Stomach (tissue), 19 donors: ENCODE measurements at regions of chr4 and their contacts with region 1.

Region 1: DNA sequence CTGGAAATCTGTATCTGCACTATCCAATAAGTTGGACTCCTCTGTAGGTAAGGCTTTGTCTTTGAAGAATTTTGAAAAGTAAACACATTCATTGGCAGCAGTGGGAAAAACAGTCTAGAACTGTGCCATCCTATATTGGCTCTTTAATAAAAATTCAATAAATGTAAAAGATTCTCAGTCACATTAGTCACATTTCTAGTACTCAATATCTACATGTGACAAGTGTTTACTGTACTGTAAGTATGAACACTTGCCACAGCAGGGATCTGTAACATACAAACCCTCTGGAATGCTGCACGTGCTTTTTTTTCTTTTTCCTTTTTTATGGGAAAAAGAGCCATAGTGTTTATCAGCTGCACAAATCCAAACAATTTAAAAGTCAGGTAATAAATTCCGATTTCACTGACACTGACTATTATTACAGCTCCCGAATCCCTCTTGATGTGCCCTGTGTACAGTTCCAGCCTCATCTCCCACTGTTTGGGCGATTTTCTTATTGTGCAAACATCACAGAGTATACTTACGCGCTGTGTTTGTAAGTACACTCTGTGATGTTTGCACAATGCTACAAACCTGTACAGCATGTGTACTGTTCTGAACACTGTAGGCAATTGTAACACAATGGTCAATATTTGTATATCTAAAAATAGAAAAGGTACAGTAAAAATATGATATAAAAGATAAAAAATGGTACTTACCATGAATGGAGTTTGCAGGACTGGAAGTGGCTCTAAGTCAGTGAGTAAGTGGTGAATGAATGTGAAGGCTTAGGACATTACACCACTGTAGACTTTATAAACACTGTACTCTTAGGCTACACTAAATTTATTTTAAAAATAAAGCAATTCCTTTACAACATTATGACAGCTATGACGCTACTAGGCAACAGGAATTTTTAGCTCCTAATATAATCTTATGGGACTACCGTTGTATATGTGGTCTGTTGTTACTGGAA is 8.7 kb downstream of the PYURF start:
- DNase-seq: peak in 1 of 2 donors; percentile 63
- H3K4me3 ChIP-seq: no peak overlapping the region
- H3K27ac ChIP-seq: peak overlapping the region in 1 of 5 donors; percentile 31
- H3K4me1 ChIP-seq: peaks cover 8 to 15% (median 11%) of the 10 kb centered on the region in 4 donors
- H3K27me3 ChIP-seq: no peaks in the 10 kb centered on the region
- CTCF ChIP-seq: no peak
- EP300 ChIP-seq: no peak
- POLR2A ChIP-seq: no peak

Region 2: GRCh38 chr4:88033309-88033708 is 481.5 kb before region 1 on chr4:
- intact Hi-C with region 1: loop called (anchors 10 kb)
- DNase-seq: peak; percentile 31 to 87
- H3K4me3 ChIP-seq: no peak overlapping the region
- H3K27ac ChIP-seq: no peak overlapping the region
- H3K4me1 ChIP-seq: peaks cover 0 to 10% (median 0%) of the 10 kb centered on the region in 4 donors
- H3K27me3 ChIP-seq: no peaks in the 10 kb centered on the region
- CTCF ChIP-seq: peak in 5 of 7 experiments; percentile 51 to 74 (median 64)
- EP300 ChIP-seq: no peak
- POLR2A ChIP-seq: no peak

Region 3: GRCh38 chr4:88216395-88216794 is 298.4 kb before region 1 on chr4:
- intact Hi-C with region 1: loop called (anchors 5 kb)
- DNase-seq: peak; percentile 80 to 83
- H3K4me3 ChIP-seq: no peak overlapping the region
- H3K27ac ChIP-seq: no peak overlapping the region
- H3K4me1 ChIP-seq: peaks cover 3 to 5% (median 4%) of the 10 kb centered on the region in 4 donors
- H3K27me3 ChIP-seq: no peaks in the 10 kb centered on the region
- CTCF ChIP-seq: no peak
- EP300 ChIP-seq: no peak
- POLR2A ChIP-seq: no peak

Region 4: DNA sequence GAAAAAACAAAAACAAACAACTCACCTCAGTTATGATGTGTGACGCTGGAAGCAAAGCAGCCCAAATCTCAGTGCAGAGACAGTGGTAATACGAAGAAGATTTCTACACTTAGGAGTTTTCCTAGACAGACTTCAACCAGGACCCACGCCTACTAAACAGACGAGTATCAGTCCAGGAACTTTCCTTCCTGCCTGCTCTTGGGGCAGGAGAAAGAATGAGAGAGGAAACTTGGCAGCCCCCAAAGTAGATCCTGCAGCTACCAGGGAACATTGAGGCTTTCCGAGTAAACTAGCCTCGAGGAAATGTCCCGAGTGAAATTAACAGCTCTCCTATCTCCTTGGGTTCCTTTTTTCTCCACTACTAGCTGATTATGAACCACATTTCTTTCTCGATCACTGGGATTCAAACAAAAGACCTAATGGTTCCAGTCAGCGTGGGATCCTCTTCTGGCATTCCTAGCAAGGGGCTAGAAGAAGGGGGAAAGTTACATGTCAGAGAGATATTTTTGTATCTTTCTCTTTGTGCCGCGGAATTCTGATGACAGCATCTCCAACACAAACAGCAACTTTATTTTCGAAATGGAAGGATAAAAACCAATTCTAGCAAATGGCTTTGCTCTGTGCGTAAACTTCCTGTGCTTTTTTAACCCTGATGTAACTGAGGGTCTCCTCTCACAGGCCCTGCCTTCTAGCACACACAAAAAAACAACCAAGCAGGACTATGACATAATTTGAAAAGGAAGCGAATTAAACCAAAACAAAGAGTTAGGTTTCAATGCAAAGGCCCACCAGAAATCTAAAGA is 283.7 kb before region 1 on chr4:
- intact Hi-C with region 1: no loop called
- DNase-seq: peak in 1 of 2 donors; percentile 57
- H3K4me3 ChIP-seq: peak overlapping the region; percentile 5 to 27 (median 24)
- H3K27ac ChIP-seq: peak overlapping the region in 4 of 5 donors; percentile 32 to 69 (median 62)
- H3K4me1 ChIP-seq: peaks cover 0 to 5% (median 0%) of the 10 kb centered on the region in 4 donors
- H3K27me3 ChIP-seq: no peaks in the 10 kb centered on the region
- CTCF ChIP-seq: no peak
- EP300 ChIP-seq: no peak
- POLR2A ChIP-seq: no peak

Region 5: GRCh38 chr4:88366460-88366859 is 148.4 kb before region 1 on chr4:
- intact Hi-C with region 1: loop called (anchors 5 kb)
- DNase-seq: no peak
- H3K4me3 ChIP-seq: no peak overlapping the region
- H3K27ac ChIP-seq: no peak overlapping the region
- H3K4me1 ChIP-seq: no peaks in the 10 kb centered on the region
- H3K27me3 ChIP-seq: no peaks in the 10 kb centered on the region
- CTCF ChIP-seq: no peak
- EP300 ChIP-seq: no peak
- POLR2A ChIP-seq: no peak

Region 6: DNA sequence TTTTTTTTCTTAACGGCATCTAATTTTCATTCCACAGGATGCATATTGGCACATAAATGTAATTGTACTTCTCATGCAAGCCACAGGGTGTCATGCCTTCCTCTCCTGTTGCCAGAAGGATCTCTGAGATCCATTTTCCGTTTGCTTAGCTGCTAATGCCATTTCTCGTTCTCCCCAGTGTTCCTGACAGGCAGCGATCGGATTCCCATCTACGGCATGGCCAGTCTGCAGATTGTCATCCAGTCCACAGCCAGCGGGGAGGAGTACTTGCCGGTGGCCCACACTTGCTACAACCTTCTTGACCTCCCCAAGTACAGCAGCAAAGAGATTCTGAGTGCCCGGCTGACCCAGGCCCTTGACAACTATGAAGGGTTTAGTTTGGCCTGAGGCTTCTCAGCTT is 191.7 kb after region 1 on chr4:
- intact Hi-C with region 1: no loop called
- DNase-seq: peak in 1 of 2 donors; percentile 81
- H3K4me3 ChIP-seq: no peak overlapping the region
- H3K27ac ChIP-seq: peak overlapping the region in 3 of 5 donors; percentile 16 to 54 (median 36)
- H3K4me1 ChIP-seq: peaks cover 0 to 12% (median 6%) of the 10 kb centered on the region in 4 donors
- H3K27me3 ChIP-seq: no peaks in the 10 kb centered on the region
- CTCF ChIP-seq: peak in 5 of 7 experiments; percentile 41 to 88 (median 52)
- EP300 ChIP-seq: no peak
- POLR2A ChIP-seq: no peak